ENCODE measurements at regions of chr20 and their contacts with region 1.

Region 1: GRCh38 chr20:36613974-36614373 is 8.4 kb downstream of the RAB5IF start:
- DNase-seq: no peak
- H3K4me3 ChIP-seq: no peak overlapping the region
- CTCF ChIP-seq: no peak

Region 2: GRCh38 chr20:36562724-36563123 is 51.2 kb before region 1 on chr20:
- CTCF ChIA-PET with region 1: interaction called, 11 read pairs
- POLR2A ChIA-PET with region 1: no interaction called
- DNase-seq: no peak
- H3K4me3 ChIP-seq: no peak overlapping the region
- CTCF ChIP-seq: no peak

Region 3: GRCh38 chr20:36629719-36630681 is 16.0 kb after region 1 on chr20:
- CTCF ChIA-PET with region 1: interaction called, 11 read pairs
- POLR2A ChIA-PET with region 1: no interaction called
- DNase-seq: no peak
- H3K4me3 ChIP-seq: no peak overlapping the region
- CTCF ChIP-seq: no peak

Region 4: DNA sequence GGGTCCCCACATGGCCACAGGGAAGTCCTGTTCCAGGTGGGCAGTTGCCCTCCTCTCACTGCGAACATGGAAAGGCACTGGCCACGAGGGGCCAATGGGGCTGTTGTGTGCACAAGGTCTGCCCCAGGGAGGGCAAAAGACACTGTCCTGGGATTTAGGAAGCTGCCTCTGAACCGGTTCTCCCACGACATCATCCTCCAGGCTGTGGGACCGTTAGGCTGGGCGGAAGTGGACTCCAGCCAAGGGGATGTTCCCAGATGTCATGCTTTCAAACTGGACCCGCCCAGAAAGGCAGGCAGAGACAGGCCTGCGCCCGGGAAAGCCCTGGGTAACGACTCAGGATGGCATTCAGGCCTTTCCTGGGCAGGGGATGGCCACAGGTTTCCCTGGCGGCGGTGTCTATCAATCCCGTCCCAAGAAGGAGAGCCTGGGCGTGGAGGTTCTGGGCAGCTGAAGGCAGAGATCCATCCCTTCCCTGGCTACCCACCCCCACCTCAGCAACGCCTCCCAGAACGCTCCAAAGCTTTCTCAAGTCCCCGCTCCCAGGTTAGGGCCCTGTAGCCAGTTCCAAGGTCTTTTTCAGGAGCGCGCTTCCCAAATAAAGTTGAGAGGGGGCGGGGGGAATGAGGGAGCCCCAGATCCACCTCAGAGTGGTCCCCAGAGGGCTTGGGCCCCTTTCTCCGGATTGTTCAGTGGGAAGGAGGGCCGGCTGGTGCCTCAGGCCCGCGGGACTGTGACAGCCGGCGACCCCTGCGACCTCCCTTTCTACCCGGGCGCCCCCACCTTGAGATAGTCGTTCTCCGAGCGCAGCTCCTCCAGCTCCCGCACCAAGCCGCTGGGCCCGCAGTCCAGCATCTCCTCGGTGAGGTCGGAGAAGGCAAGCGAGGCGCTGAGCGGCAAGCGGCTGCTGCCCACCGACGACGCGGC is 248.2 kb after region 1 on chr20:
- CTCF ChIA-PET with region 1: interaction called, 15 read pairs
- POLR2A ChIA-PET with region 1: no interaction called
- DNase-seq: no peak
- H3K4me3 ChIP-seq: peak overlapping the region; percentile 69
- CTCF ChIP-seq: no peak

Region 5: DNA sequence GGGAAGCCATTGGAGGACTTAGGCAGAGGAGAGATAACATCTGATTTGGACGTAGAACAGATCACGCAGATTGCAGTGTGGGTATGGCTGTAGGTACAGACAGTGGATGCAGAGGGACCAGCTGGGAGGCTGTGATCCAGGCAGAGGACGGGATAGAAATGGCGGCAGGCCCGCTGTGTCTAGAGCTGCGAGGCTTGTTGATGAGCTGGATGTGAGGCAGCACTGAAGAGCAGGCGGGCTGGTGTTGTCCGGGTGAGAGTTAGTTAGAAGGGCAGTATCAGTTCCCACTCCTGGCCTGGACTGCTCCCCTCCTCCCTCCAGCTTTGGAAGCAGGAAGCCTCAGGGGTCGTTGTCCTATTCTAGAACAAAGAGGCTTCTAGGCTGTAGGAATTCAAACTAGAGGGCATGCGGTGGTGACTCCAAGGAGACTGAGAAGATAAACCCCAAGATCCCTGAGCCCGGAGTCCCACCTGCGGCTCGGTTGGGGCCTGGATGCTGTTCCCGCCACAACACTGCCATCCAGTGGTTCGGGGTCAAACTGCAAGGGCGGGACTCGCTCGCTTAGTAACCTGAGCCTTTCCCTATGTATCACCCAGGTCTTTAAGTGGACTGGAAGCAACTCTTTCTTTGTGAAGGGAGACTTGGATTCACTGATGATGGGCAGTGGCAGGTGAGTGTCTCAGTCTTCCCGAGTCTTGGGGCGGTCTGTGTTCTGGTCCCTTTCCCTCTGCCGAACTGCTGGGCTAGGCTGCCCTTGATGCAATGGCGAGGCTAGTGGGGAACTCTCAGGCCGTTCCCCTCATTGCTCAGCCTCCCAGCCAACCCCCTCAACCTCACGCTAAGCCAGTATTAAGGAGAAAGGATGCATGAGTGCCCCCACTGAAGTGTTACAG is 273.1 kb after region 1 on chr20:
- CTCF ChIA-PET with region 1: interaction called, 31 read pairs
- POLR2A ChIA-PET with region 1: no interaction called
- DNase-seq: no peak
- H3K4me3 ChIP-seq: peak overlapping the region; percentile 43
- CTCF ChIP-seq: peak; percentile 94

Measured in AG04449 (cell line).